Activated CD8-positive, alpha-beta T cell treated with anti-CD3 and anti-CD28 coated beads for 36 hours (primary cell): ENCODE measurements at regions of chr10 and their contacts with region 1.

Region 1: DNA sequence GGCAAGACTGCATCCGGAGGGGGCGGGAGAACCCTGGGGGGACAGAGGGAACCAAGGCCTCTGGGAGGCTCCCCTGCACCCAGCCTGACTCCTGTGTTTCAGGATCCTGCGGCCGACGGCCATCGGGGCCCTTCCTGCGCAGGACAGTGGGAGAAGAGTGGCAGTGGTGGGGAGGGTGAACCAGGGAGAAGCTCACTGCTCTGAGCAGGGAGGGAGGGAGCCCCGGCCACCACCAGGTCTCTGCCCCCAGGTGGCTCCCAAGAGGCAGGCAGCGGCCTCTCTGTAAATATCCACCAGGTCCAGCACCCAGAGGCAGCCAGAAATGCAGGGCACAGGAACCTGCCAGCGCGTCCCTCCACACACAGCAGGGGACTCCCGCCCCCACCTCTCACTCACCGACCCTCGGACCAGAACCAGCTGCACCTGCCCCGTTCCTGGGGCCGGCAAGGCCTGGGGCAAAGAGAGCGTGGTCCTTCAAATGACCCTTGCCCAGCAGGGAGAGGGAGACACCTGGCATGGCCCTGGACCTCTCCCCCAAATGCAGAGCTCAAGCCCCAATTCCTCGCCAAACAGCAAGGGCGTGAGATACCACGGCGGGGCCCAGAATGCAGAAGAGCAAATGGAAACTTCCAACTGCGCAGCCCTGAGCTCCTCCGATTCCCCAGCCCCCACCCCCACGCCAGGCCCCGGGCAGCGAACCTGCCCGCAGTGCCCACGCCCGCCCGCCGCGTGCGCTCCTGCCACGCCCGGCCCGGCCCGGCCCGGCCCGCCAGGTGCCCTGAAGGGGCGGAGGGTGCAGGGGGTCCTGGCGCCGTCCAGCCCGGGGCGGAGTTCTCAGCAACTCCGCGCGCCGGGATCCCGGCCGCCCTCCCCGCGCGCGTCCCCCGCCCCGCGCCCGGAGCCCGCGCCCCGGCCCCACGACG is 805 bp downstream of the RASGEF1A start:
- DNase-seq: peak; percentile 54
- ATAC-seq: peak; percentile 80
- H3K4me3 Mint-ChIP-seq: peak overlapping the region; percentile 65
- H3K27ac Mint-ChIP-seq: no peak overlapping the region
- H3K4me1 Mint-ChIP-seq: peaks cover 9% of the 10 kb centered on the region
- H3K27me3 Mint-ChIP-seq: peaks cover 49% of the 10 kb centered on the region
- CTCF ChIP-seq: peak; percentile 43

Region 2: GRCh38 chr10:43234471-43235041 is 31.5 kb before region 1 on chr10:
- CTCF ChIA-PET with region 1: no interaction called
- POLR2A ChIA-PET with region 1: no interaction called
- intact Hi-C with region 1: no loop called
- DNase-seq: no peak
- ATAC-seq: no peak
- H3K4me3 Mint-ChIP-seq: no peak overlapping the region
- H3K27ac Mint-ChIP-seq: no peak overlapping the region
- H3K4me1 Mint-ChIP-seq: peaks cover 13% of the 10 kb centered on the region
- H3K27me3 Mint-ChIP-seq: peaks cover 2% of the 10 kb centered on the region
- CTCF ChIP-seq: no peak

Region 3: GRCh38 chr10:43255634-43256431 is 10.2 kb before region 1 on chr10:
- CTCF ChIA-PET with region 1: interaction called, 13 read pairs
- POLR2A ChIA-PET with region 1: no interaction called
- intact Hi-C with region 1: no loop called
- DNase-seq: peak; percentile 69
- ATAC-seq: peak; percentile 91
- H3K4me3 Mint-ChIP-seq: no peak overlapping the region
- H3K27ac Mint-ChIP-seq: no peak overlapping the region
- H3K4me1 Mint-ChIP-seq: no peaks in the 10 kb centered on the region
- H3K27me3 Mint-ChIP-seq: no peaks in the 10 kb centered on the region
- CTCF ChIP-seq: peak; percentile 77

Region 4: GRCh38 chr10:43304687-43305340 is 38.8 kb after region 1 on chr10:
- CTCF ChIA-PET with region 1: interaction called, 10 read pairs
- POLR2A ChIA-PET with region 1: no interaction called
- intact Hi-C with region 1: no loop called
- DNase-seq: peak; percentile 78
- ATAC-seq: peak; percentile 48
- H3K4me3 Mint-ChIP-seq: peak overlapping the region; percentile 59
- H3K27ac Mint-ChIP-seq: no peak overlapping the region
- H3K4me1 Mint-ChIP-seq: peaks cover 45% of the 10 kb centered on the region
- H3K27me3 Mint-ChIP-seq: peaks cover 18% of the 10 kb centered on the region
- CTCF ChIP-seq: no peak

Region 5: GRCh38 chr10:43348511-43349312 is 82.7 kb after region 1 on chr10:
- CTCF ChIA-PET with region 1: interaction called, 14 read pairs
- POLR2A ChIA-PET with region 1: no interaction called
- intact Hi-C with region 1: no loop called
- DNase-seq: peak; percentile 92
- ATAC-seq: peak; percentile 100
- H3K4me3 Mint-ChIP-seq: no peak overlapping the region
- H3K27ac Mint-ChIP-seq: peak overlapping the region; percentile 12
- H3K4me1 Mint-ChIP-seq: peaks cover 8% of the 10 kb centered on the region
- H3K27me3 Mint-ChIP-seq: peaks cover 11% of the 10 kb centered on the region
- CTCF ChIP-seq: peak; percentile 95

Region 6: GRCh38 chr10:43427166-43427825 is 161.2 kb after region 1 on chr10:
- CTCF ChIA-PET with region 1: no interaction called
- POLR2A ChIA-PET with region 1: no interaction called
- intact Hi-C with region 1: no loop called
- DNase-seq: peak; percentile 66
- ATAC-seq: peak; percentile 74
- H3K4me3 Mint-ChIP-seq: peak overlapping the region; percentile 46
- H3K27ac Mint-ChIP-seq: peak overlapping the region; percentile 71
- H3K4me1 Mint-ChIP-seq: peaks cover 13% of the 10 kb centered on the region
- H3K27me3 Mint-ChIP-seq: no peaks in the 10 kb centered on the region
- CTCF ChIP-seq: no peak